Ovary (tissue), 10 donors: ENCODE measurements at regions of chr9 and their contacts with region 1.

Region 1: GRCh38 chr9:70043689-70044489 is at the start of gene MAMDC2:
- DNase-seq: peak; percentile 63 to 79 (median 68)
- H3K4me3 ChIP-seq: peak within 1 kb of the TSS; percentile 80
- H3K27ac ChIP-seq: peak within 1 kb of the TSS; percentile 79 to 83
- H3K4me1 ChIP-seq: peaks cover 11% of the 10 kb centered on the region
- H3K27me3 ChIP-seq: no peaks in the 10 kb centered on the region
- CTCF ChIP-seq: no peak
- EP300 ChIP-seq: no peak
- POLR2A ChIP-seq: peak; percentile 32
- total RNA-seq, gene MAMDC2: 24.6 to 92.3 (median 69.5) TPM

Region 2: DNA sequence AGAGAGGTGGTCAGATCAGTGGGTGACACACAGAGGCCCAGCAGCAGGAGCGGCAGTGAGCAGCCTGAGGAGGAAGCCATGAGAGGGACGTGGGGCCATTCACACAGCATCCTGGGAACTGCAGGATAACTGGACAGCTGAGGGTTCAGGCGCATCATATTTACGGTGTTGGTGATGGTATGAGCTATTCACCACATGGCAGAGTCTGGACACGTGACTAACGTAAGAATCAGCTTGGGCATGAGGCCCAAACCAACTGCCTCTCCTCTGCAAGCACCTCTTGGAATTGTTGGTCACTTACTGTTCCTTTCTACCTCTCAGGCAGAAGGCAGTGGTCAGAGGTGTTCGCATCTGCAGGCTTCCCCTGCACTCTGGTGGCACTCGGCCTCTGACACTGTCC is 577.7 kb before region 1 on chr9:
- intact Hi-C with region 1: no loop called
- DNase-seq: no peak
- H3K4me3 ChIP-seq: no peak overlapping the region
- H3K27ac ChIP-seq: no peak overlapping the region
- H3K4me1 ChIP-seq: peaks cover 14% of the 10 kb centered on the region
- H3K27me3 ChIP-seq: no peaks in the 10 kb centered on the region
- CTCF ChIP-seq: no peak
- EP300 ChIP-seq: no peak
- POLR2A ChIP-seq: no peak

Region 3: DNA sequence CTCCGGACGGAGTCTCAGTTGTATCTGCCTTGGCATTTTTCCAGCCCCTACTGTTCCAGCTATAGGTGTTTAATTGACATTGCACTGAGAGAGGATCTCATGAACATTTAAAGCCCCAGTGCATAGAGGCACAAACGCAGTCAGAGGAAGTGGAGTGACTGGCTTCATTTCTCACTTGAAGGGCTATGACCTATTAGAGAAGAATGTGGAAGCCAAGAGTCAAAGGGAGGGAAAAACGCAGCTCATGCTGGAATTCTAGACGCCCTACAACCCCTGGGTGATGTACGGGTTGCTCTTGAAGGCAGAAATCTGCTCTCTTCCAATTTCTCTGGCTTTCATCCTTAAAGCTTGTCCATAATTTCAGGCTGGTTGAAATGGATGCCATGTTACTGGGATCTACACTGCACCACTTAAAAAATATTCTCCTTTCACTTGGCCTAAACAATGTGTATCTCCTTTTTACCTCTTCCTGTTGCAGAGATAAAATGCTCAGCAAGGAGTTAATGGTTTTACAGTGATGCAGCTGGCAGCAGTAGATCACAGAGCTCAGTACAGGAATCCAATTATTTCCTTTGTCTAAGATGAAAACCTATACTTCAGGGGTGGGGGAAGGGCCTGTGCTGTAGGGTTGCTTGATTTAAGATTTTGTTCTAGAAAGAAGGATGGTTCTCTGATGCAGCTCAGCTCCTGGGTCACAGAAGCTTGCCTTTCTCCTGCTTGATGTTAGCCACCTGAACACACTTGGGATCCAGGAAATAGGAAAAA is 62.0 kb before region 1 on chr9:
- intact Hi-C with region 1: loop called in 1 of 4 experiments (anchors 10 kb)
- DNase-seq: no peak
- H3K4me3 ChIP-seq: no peak overlapping the region
- H3K27ac ChIP-seq: no peak overlapping the region
- H3K4me1 ChIP-seq: peaks cover 2% of the 10 kb centered on the region
- H3K27me3 ChIP-seq: no peaks in the 10 kb centered on the region
- CTCF ChIP-seq: no peak
- EP300 ChIP-seq: no peak
- POLR2A ChIP-seq: no peak

Region 4: GRCh38 chr9:69996967-69997366 is 46.9 kb before region 1 on chr9:
- intact Hi-C with region 1: loop called in 2 of 4 experiments (anchors 5 kb)
- DNase-seq: peak in 2 of 5 donors; percentile 54 to 63
- H3K4me3 ChIP-seq: no peak overlapping the region
- H3K27ac ChIP-seq: peak overlapping the region in 1 of 2 donors; percentile 33
- H3K4me1 ChIP-seq: peaks cover 9% of the 10 kb centered on the region
- H3K27me3 ChIP-seq: no peaks in the 10 kb centered on the region
- CTCF ChIP-seq: no peak
- EP300 ChIP-seq: peak; percentile 77
- POLR2A ChIP-seq: no peak

Region 5: DNA sequence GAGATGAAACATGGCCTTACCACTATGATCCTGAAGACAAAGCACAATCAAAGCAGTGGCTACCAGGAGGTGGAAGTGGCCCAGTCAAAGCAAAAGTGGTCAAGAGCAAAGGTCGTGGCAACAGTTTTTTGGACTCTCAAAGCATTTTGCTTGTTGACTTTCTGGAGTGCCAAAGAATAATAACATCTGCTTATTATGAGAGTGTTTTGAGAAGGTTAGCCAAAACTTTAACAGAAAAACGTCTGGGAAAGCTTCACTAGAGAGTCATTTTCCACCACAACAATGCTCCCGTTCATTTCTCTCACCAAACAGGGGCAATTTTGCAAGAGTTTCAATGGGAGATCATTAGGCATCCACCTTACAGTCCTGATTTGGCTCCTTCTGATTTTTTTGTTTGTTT is 33.9 kb before region 1 on chr9:
- intact Hi-C with region 1: no loop called
- DNase-seq: no peak
- H3K4me3 ChIP-seq: no peak overlapping the region
- H3K27ac ChIP-seq: no peak overlapping the region
- H3K4me1 ChIP-seq: peaks cover 5% of the 10 kb centered on the region
- H3K27me3 ChIP-seq: no peaks in the 10 kb centered on the region
- CTCF ChIP-seq: no peak
- EP300 ChIP-seq: no peak
- POLR2A ChIP-seq: no peak

Region 6: GRCh38 chr9:70073193-70073592 is 29.3 kb after region 1 on chr9:
- intact Hi-C with region 1: no loop called
- DNase-seq: no peak
- H3K4me3 ChIP-seq: no peak overlapping the region
- H3K27ac ChIP-seq: peak overlapping the region; percentile 5 to 62
- H3K4me1 ChIP-seq: peaks cover 41% of the 10 kb centered on the region
- H3K27me3 ChIP-seq: no peaks in the 10 kb centered on the region
- CTCF ChIP-seq: no peak
- EP300 ChIP-seq: no peak
- POLR2A ChIP-seq: no peak

Region 7: DNA sequence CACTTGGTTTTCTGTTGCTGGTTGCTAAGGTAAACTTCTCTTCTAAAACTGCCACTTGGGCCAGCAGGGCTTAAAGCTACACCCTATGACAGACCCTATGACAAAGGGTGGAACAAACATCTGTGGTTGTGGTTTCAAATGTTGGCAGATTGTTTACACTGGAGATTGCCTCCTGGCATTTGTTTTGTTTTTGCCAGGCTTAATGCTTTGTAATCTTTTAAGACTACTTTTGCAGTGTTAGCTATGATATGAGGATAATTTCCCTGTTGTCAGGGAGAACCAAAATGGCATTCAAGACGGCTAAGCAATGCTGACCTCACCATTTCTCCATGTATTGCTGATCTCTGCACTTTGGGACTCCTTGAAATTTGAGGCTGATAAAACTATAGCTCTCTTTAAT is 50.1 kb after region 1 on chr9:
- intact Hi-C with region 1: loop called in 1 of 4 experiments (anchors 10 kb)
- DNase-seq: no peak
- H3K4me3 ChIP-seq: no peak overlapping the region
- H3K27ac ChIP-seq: no peak overlapping the region
- H3K4me1 ChIP-seq: peaks cover 4% of the 10 kb centered on the region
- H3K27me3 ChIP-seq: no peaks in the 10 kb centered on the region
- CTCF ChIP-seq: no peak
- EP300 ChIP-seq: no peak
- POLR2A ChIP-seq: no peak

Region 8: DNA sequence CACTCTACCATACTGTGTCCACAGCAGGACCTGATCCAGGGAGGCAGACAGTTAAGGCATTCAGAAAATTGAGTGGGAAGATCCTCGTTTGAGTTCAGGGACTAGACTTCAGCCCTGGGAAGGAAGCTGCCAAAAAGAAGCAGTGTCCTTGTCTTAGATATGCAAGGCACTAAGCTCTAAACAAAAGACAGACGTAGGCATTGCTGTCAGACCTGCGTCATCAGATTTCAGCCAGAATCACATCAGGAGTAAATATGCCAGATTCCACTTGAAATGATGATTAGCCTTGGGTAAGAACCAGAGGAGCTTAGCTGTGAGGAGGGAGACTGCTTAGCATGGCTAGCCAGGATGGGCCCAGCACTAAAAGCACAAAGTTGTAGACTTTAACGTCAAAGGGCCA is 56.5 kb after region 1 on chr9:
- intact Hi-C with region 1: loop called in 2 of 4 experiments (anchors 10 kb)
- DNase-seq: peak in 3 of 5 donors; percentile 33 to 67 (median 35)
- H3K4me3 ChIP-seq: no peak overlapping the region
- H3K27ac ChIP-seq: peak overlapping the region in 1 of 2 donors; percentile 35
- H3K4me1 ChIP-seq: no peaks in the 10 kb centered on the region
- H3K27me3 ChIP-seq: no peaks in the 10 kb centered on the region
- CTCF ChIP-seq: no peak
- EP300 ChIP-seq: peak; percentile 73
- POLR2A ChIP-seq: no peak

Region 9: GRCh38 chr9:70111042-70111602 is 67.2 kb after region 1 on chr9:
- intact Hi-C with region 1: loop called in 2 of 4 experiments (anchors 10 kb)
- DNase-seq: peak; percentile 83 to 91 (median 87)
- H3K4me3 ChIP-seq: no peak overlapping the region
- H3K27ac ChIP-seq: no peak overlapping the region
- H3K4me1 ChIP-seq: peaks cover 1% of the 10 kb centered on the region
- H3K27me3 ChIP-seq: no peaks in the 10 kb centered on the region
- CTCF ChIP-seq: peak; percentile 47 to 76 (median 68)
- EP300 ChIP-seq: no peak
- POLR2A ChIP-seq: no peak

Region 10: DNA sequence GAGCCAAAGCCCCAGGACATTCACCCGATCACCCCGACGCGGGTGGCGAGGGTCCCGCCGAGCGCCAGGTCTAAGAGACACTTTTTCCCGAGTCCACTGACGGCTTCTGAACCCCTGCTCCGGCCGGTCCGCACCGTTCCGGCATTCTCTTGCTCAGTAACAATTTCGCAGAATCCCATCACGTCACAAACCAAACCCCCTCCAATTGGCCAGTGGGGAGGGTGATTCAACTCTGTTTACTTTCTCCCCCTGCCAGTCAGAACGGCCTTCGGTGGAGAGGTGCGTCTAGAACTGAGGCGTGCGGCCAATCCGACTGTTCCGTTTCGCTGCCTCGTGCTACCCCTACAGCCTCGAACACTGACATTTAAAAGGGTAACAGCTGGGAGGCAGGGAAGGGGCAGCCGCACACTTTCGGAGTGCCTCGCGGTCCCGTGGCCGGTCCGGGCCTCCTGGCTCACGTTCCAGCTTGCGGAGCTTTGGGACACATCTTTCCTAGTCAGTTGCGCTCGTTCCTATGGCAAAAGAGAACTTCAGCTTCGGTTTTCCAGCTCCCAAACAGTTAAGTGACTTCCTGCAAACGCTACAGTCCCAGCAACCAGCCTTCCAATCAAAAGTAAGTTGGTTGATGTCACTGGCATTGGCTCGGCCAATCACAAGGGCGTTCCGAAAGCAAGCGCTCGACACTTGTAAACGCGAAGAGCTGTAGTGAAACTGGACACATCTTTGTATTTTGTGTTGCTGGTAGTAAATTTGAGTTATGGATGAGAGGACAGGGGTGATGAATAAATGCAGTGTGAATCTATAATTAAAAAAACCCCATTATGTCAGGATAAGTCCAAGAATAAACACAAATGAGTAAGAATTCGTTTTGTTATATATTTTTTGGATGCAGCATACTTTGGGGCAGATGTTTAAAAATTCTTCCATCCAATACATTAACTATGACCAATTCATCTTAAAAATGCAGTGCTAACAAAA is 370.2 kb after region 1 on chr9 and contains the start of gene KLF9:
- intact Hi-C with region 1: no loop called
- DNase-seq: peak; percentile 93 to 98 (median 94)
- H3K4me3 ChIP-seq: peak within 1 kb of the TSS; percentile 97
- H3K27ac ChIP-seq: peak within 1 kb of the TSS; percentile 98 to 100
- H3K4me1 ChIP-seq: peaks cover 7% of the 10 kb centered on the region
- H3K27me3 ChIP-seq: no peaks in the 10 kb centered on the region
- CTCF ChIP-seq: no peak
- EP300 ChIP-seq: peak; percentile 80
- POLR2A ChIP-seq: peak; percentile 92
- total RNA-seq, gene KLF9: 15.1 to 171 (median 91.0) TPM